ENCODE measurements at regions of chr11 and their contacts with region 1.

Region 1: DNA sequence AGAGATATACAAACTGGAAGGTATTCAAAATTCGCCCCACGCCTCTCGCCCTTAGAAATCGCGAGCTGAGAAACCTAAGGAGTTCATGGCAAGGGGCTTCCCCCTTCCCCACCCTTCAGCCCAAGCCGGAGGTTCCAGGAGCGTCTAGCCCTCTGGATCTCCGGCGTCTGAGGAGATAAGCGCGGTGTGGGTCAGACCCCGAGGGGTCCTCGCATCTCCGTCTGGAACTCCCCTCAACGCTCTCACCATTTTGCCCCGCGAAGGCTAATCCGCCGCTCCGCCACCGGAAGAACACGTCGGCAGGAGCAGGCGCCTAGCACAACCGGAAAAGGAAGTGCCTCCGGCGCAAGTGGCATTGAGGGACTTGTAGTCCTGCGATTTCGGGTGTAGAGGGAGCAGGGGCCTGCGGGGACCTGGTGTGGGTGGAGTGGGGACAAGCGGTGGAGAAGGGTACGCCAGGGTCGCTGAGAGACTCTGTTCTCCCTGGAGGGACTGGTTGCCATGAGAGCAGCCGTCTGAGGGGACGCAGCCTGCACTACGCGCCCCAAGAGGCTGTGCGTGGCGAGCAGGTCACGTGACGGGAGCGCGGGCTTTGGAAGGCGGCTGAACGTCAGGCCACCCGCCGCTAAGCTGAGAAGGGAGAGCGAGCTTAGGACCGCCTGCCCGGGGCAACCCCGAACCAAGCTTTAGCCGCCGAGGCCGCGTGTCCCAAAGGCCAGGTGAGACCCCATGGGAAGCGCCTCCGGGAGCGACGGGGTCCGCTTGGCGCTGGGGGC is at the starts of genes FEN1 and TMEM258:
- DNase-seq: peak; percentile 96
- H3K4me3 Mint-ChIP-seq: peak within 1 kb of the TSS; percentile 95
- H3K27ac Mint-ChIP-seq: peak within 1 kb of the TSS; percentile 99
- H3K4me1 Mint-ChIP-seq: peaks cover 43% of the 10 kb centered on the region
- H3K27me3 Mint-ChIP-seq: no peaks in the 10 kb centered on the region
- total RNA-seq, gene FEN1: 144 and 152 TPM in 2 replicates
- total RNA-seq, gene TMEM258: 179 and 187 TPM in 2 replicates

Region 2: DNA sequence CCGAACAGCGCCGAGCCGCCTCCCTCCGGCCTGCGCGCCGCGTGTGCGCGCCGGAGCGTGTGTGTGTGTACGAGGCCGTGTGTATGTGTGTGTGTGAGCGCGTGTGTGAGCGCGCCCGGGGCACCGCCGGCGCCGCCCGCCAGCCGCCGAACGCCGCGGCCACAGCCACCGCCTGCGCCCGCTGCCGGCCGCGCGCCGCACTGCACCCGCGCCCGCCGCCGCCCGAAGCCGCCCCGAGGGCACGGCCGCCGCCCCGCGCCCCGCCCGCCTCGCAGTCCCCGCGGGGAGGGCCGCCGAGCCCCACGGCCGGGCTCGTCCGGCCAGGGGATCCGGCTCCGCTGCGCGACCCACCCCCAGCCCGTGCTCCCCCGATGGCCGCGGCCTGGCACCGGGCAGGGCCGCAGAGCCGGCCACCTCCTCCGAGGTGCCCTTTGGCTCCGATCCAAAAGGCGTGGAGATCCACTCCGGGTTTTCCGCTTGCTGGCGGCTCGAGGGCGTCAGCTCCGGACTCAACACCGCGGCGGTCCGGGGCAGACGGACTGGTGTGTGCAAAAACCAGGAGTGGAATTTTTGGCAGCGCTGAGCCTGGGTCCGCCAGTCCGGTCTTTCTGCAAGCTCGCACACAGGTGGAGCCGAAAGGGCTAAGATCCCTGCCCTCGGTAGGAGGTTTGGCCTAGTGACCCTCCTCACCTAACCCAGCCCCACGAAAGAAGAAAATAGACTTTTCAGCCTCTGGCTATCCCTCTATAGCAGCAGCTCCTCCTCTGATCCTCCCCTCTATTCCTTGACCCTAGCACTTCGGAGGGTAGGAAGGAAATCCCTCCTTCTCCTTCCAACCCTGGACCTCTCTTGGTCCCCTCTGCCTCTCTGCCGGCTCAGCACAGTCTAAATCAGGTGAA is 211.2 kb before region 1 on chr11 and contains the start of gene SYT7:
- intact Hi-C with region 1: loop called (anchors 1 kb)
- DNase-seq: peak; percentile 98
- H3K4me3 Mint-ChIP-seq: peak within 1 kb of the TSS; percentile 78
- H3K27ac Mint-ChIP-seq: peak within 1 kb of the TSS; percentile 70
- H3K4me1 Mint-ChIP-seq: peaks cover 8% of the 10 kb centered on the region
- H3K27me3 Mint-ChIP-seq: peaks cover 60% of the 10 kb centered on the region
- total RNA-seq, gene SYT7: 0.23 and 0.43 TPM in 2 replicates

Region 3: GRCh38 chr11:61659414-61660209 is 132.9 kb before region 1 on chr11:
- intact Hi-C with region 1: no loop called
- DNase-seq: no peak
- H3K4me3 Mint-ChIP-seq: no peak overlapping the region
- H3K27ac Mint-ChIP-seq: no peak overlapping the region
- H3K4me1 Mint-ChIP-seq: no peaks in the 10 kb centered on the region
- H3K27me3 Mint-ChIP-seq: peaks cover 2% of the 10 kb centered on the region

Region 4: GRCh38 chr11:61718621-61719302 is 73.7 kb before region 1 on chr11:
- intact Hi-C with region 1: no loop called
- DNase-seq: no peak
- H3K4me3 Mint-ChIP-seq: no peak overlapping the region
- H3K27ac Mint-ChIP-seq: no peak overlapping the region
- H3K4me1 Mint-ChIP-seq: no peaks in the 10 kb centered on the region
- H3K27me3 Mint-ChIP-seq: peaks cover 3% of the 10 kb centered on the region

Region 5: DNA sequence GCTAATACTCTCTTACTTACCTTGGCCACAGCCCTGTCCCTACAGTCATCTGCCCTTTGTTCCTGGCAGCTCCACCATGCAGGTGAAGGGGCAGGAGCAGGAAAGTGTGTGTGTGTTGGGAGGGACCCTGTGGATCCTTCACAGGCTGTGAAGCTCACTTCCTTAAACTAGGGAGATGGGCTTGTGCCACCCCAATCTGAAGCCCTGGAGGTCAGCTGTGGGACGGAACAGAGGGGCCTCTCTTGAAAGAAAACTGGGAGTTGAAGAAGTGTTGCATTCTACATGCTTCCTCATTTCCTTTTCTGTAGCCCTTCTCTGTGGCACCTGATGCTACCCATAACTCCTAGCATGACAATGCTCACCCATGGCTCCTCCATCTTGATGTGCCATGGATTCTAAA is 12.6 kb after region 1 on chr11:
- intact Hi-C with region 1: no loop called
- DNase-seq: no peak
- H3K4me3 Mint-ChIP-seq: no peak overlapping the region
- H3K27ac Mint-ChIP-seq: peak overlapping the region; percentile 57
- H3K4me1 Mint-ChIP-seq: peaks cover 7% of the 10 kb centered on the region
- H3K27me3 Mint-ChIP-seq: no peaks in the 10 kb centered on the region

Region 6: DNA sequence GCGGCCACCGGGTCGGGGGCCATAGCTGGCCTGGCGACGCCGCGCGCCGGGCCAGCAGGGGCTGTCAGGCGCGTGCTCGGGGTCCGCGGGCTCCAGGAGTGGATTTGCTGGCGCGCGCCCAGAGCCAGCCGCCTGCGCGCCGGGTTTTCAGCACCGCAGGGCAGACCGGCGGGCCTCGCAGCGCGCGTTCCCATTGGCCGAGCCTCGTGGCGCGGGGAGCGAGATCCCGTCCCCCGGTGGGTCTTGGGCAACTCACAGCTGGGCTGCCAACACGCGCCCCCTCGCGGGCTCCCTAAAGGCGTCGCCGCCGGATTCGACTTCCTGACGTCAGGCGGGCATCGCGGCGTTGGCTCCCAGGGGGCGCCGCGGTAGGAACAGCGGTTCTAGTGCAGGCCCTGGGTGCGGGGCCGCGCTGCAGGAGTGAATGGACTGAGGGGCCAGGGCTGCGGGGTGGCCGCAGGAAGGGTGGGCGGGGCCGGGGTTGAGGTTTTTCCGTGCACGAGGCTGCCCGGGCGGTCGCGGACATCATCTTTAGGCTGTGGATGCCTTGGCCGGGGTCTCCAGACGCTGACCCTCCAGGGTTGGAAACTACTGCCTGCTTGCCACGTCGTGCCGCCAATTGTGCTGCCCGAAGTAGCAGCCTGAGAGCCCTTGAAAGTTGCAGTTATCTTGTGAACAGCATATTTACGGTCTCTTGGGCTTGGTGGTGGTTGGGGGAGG is 24.4 kb after region 1 on chr11 and contains the start of gene FADS1:
- intact Hi-C with region 1: loop called (anchors 1 kb)
- DNase-seq: peak; percentile 95
- H3K4me3 Mint-ChIP-seq: peak within 1 kb of the TSS; percentile 97
- H3K27ac Mint-ChIP-seq: peak within 1 kb of the TSS; percentile 94
- H3K4me1 Mint-ChIP-seq: peaks cover 20% of the 10 kb centered on the region
- H3K27me3 Mint-ChIP-seq: peaks cover 2% of the 10 kb centered on the region
- total RNA-seq, gene FADS1: 92.5 and 94.7 TPM in 2 replicates

Region 7: GRCh38 chr11:61871158-61871597 is 78.7 kb after region 1 on chr11:
- intact Hi-C with region 1: loop called (anchors 1 kb)
- DNase-seq: peak; percentile 92
- H3K4me3 Mint-ChIP-seq: peak overlapping the region; percentile 68
- H3K27ac Mint-ChIP-seq: peak overlapping the region; percentile 10
- H3K4me1 Mint-ChIP-seq: peaks cover 7% of the 10 kb centered on the region
- H3K27me3 Mint-ChIP-seq: no peaks in the 10 kb centered on the region

Region 8: DNA sequence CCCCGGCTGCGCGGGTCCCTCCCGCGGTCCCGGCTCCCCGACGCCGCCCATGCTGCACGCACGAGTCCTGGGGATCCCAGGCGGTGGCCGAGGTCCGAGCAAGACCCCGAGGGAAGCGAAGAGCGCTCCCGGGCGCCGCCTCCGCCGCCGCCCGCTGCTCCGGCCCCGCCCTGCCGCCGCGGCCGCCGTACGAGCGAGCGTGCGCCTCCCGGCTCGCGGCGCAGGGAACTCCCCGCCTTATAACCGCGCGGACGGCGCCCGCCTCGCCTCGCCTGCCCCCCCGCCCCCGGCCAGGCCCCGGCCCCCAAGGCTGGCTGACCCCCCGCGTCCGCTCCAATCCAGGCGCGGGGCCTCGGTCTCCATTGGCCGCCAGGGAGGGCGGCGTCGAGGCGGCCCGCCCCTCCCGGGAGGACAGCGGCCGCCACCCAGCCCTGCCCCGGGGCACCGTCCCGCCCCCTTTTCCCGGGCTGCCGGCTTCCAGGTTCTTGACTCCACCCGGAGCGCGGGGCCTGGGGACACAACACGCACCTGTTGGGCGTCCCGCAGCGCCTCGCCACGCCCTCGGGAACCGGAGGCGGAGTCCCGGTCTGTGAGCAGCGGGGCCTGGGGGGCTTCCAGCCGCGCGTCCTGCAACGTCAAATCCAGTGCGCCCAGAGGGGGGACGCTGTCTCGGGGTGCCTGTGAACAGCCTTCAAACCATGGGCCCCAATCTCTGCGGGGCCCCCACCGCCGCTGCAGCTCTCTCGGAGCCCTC is 99.0 kb after region 1 on chr11 and contains the start of gene FADS3:
- intact Hi-C with region 1: no loop called
- DNase-seq: peak; percentile 92
- H3K4me3 Mint-ChIP-seq: peak within 1 kb of the TSS; percentile 83
- H3K27ac Mint-ChIP-seq: peak within 1 kb of the TSS; percentile 29
- H3K4me1 Mint-ChIP-seq: peaks cover 4% of the 10 kb centered on the region
- H3K27me3 Mint-ChIP-seq: peaks cover 13% of the 10 kb centered on the region
- total RNA-seq, gene FADS3: 13.5 and 15.6 TPM in 2 replicates

Region 9: DNA sequence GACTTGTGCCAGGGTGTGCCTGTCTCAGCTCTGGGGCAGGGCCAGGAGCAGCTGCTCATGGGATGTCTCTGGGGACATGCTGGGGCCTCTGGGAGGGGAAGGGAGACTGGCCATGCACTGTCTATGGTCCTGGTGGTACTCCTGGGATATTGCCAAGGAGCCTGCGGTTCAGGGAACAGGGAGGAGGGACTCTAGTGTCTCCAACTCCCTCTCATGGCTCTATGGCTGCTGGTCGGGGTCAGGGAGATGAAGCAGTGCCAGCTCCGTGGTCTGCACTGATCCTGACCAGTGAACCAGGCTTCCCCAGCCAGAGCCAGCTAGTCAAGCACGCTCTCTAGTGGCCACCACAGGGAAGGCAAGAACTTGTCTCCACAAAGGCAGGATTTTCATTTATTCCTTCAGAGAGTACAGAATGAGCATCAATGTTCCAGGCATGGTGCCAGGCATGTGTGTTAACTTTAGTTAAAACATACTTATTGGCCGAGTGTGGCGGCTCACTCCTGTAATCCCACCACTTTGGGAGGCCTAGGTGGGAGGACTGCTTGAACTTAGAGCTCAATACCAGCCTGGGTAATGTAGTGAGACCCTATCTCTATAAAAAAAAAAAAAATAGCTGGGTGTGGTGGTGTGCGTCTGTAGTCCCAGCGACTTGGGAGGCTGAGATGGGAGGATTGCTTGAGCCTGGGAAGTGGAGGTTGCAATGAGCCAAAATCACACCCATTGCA is 155.2 kb after region 1 on chr11:
- intact Hi-C with region 1: loop called (anchors 1 kb)
- DNase-seq: peak; percentile 91
- H3K4me3 Mint-ChIP-seq: no peak overlapping the region
- H3K27ac Mint-ChIP-seq: no peak overlapping the region
- H3K4me1 Mint-ChIP-seq: peaks cover 2% of the 10 kb centered on the region
- H3K27me3 Mint-ChIP-seq: peaks cover 8% of the 10 kb centered on the region

Region 10: DNA sequence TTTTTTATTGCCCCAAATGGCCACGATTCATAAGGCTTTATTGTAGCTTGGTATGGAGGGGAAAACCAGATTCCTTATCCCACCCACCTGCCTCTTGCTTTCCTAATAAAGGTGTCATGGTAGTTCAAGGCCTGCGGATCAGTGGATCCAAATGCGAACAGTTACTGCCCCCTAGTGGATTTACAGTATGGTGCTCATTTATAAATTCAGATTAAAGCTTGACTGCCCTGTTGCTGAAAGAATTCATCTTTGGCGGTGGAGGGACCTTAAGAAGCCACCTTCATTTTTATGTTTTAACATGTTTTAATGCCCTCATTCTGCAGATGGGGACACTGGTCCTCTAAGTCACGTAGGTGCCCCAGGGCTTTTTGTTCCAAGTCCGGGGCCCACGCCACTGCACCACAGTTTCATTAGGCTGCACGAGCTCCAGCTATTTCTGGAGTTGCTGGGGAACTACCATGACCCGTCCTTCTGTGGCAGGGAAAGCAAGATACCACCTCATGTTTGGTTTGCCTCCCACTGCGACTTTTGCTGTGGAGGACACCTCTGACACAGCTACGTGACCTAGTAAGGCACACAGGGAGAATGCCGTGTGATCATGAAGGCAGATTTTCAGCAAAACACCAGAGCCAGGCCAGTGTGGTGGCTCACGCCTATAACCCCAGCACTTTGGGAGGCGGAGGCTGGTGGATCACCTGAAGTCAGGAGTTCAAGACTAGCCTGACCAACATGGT is 315.7 kb after region 1 on chr11:
- intact Hi-C with region 1: loop called (anchors 5 kb)
- DNase-seq: peak; percentile 83
- H3K4me3 Mint-ChIP-seq: no peak overlapping the region
- H3K27ac Mint-ChIP-seq: no peak overlapping the region
- H3K4me1 Mint-ChIP-seq: peaks cover 18% of the 10 kb centered on the region
- H3K27me3 Mint-ChIP-seq: peaks cover 7% of the 10 kb centered on the region

Measured in activated CD4-positive, alpha-beta T cell treated with anti-CD3 and anti-CD28 coated beads, Interleukin-2, amount 10 ng/mL, durations not matched to agents 24 days and 14 days (primary cell).